PC-3 (cell line): ENCODE measurements at regions of chr7 and their contacts with region 1.

Region 1: GRCh38 chr7:32093415-32094408 is 23.5 kb upstream of the PDE1C start:
- DNase-seq: peak; percentile 96
- ATAC-seq: peak; percentile 81
- H3K4me3 ChIP-seq: no peak overlapping the region
- H3K27ac ChIP-seq: peak overlapping the region; percentile 84
- H3K4me1 ChIP-seq: peaks cover 40% of the 10 kb centered on the region
- H3K27me3 ChIP-seq: no peaks in the 10 kb centered on the region
- CTCF ChIP-seq: no peak

Region 2: DNA sequence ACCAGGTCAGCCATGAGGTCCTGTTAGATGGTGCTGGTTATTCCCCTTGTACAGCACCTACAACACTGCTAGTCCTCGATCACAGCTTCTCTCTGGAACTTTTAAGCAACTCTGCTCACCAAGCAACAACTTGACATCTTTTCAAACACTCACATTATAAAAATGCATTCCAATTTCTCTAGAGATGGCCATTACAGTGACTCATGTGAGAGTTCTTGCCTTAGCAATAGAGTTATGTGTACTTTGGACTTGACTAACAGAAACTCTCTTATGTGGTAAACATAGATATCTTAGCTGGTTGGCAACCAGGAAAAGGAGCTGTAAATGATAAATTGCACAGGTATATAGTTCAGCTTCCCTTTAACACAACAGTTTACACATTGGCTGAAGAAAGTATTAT is 145.7 kb before region 1 on chr7:
- CTCF ChIA-PET with region 1: no interaction called
- POLR2A ChIA-PET with region 1: no interaction called
- intact Hi-C with region 1: loop called (anchors 5 kb)
- DNase-seq: peak; percentile 93
- ATAC-seq: peak; percentile 87
- H3K4me3 ChIP-seq: no peak overlapping the region
- H3K27ac ChIP-seq: peak overlapping the region; percentile 87
- H3K4me1 ChIP-seq: peaks cover 43% of the 10 kb centered on the region
- H3K27me3 ChIP-seq: no peaks in the 10 kb centered on the region
- CTCF ChIP-seq: no peak

Region 3: GRCh38 chr7:32062150-32062549 is 31.6 kb before region 1 on chr7:
- CTCF ChIA-PET with region 1: no interaction called
- POLR2A ChIA-PET with region 1: no interaction called
- intact Hi-C with region 1: no loop called
- DNase-seq: peak; percentile 64
- ATAC-seq: peak; percentile 24; the same call in 1 of the 2 replicates
- H3K4me3 ChIP-seq: no peak overlapping the region
- H3K27ac ChIP-seq: no peak overlapping the region
- H3K4me1 ChIP-seq: peaks cover 19% of the 10 kb centered on the region
- H3K27me3 ChIP-seq: no peaks in the 10 kb centered on the region
- CTCF ChIP-seq: peak; percentile 72

Region 4: DNA sequence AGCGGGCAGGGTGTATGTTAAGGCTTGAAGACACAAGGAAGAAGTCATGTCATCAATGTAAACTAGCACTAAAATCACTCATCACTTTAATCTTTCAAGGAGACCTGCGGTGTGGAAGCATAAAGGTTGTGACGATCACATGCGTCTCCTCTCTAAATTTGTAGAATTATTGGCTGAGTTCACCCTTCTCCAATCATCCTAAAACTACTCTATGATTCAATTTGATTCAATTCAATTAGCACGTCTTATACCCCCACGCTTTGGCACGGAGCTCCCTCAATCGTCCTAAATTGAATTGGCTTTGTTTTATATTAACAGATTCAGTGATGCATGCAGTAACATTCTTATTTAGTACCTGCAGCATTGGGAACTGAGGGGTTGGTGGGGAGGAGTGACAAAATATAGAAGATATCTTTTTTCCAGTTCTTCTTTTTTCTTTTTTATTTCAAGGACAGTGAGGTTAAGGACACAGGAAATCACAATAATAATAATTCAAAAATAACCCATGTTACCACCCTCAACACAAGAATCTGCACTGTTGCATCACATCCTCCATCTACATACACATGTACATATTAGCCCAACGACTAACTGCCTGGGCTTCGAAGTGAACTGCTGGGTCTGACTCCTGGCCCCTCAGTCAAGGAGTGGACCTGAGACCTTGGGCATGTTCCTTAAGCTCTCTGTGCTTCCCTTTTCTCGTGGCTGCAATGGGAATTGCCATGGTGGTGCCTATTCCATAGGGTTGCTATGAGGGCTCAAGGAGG is 309.9 kb after region 1 on chr7:
- CTCF ChIA-PET with region 1: no interaction called
- POLR2A ChIA-PET with region 1: no interaction called
- intact Hi-C with region 1: no loop called
- DNase-seq: no peak
- ATAC-seq: no peak
- H3K4me3 ChIP-seq: no peak overlapping the region
- H3K27ac ChIP-seq: no peak overlapping the region
- H3K4me1 ChIP-seq: no peaks in the 10 kb centered on the region
- H3K27me3 ChIP-seq: peaks cover 85% of the 10 kb centered on the region
- CTCF ChIP-seq: no peak

Region 5: DNA sequence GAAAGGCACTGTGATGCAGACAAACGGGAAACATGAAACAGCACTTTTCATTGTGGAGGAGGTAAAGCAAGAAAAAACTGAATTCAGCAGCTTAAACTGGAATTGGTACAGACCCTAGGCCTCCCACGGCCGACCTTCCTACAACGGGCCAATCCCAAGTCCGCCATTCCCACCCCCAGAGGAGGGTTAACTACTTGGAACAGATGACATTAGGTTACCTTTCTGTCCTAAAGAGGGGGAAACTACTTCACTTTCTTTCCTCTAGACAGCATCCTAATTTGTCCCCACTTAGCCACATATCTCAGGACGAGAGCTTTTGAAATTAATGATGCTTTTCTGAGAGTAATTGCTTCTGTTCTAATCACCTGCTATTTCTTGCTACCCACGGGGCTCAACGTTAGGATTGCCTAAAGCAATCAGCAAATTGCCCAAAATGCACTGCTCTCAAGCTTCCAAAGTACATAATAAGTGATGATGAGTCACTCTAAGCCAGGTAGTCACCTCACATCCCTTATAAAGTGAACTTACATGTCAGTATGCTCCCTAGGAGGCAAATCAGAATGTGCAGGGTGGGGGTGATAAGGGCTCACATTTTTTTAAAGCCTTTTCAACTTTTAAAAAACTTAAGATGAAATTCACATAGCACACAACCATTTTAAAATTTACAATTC is 359.8 kb after region 1 on chr7:
- CTCF ChIA-PET with region 1: no interaction called
- POLR2A ChIA-PET with region 1: no interaction called
- intact Hi-C with region 1: no loop called
- DNase-seq: peak; percentile 67
- ATAC-seq: peak; percentile 86
- H3K4me3 ChIP-seq: no peak overlapping the region
- H3K27ac ChIP-seq: no peak overlapping the region
- H3K4me1 ChIP-seq: no peaks in the 10 kb centered on the region
- H3K27me3 ChIP-seq: peaks cover 41% of the 10 kb centered on the region
- CTCF ChIP-seq: no peak